Dendritic cell treated with granulocyte-macrophage colony-stimulating factor and Interleukin-4, amounts not matched to agents 40 ng/mL and 50 ng/mL, for 4 days (primary cell): ENCODE measurements at regions of chr6 and their contacts with region 1.

Region 1: DNA sequence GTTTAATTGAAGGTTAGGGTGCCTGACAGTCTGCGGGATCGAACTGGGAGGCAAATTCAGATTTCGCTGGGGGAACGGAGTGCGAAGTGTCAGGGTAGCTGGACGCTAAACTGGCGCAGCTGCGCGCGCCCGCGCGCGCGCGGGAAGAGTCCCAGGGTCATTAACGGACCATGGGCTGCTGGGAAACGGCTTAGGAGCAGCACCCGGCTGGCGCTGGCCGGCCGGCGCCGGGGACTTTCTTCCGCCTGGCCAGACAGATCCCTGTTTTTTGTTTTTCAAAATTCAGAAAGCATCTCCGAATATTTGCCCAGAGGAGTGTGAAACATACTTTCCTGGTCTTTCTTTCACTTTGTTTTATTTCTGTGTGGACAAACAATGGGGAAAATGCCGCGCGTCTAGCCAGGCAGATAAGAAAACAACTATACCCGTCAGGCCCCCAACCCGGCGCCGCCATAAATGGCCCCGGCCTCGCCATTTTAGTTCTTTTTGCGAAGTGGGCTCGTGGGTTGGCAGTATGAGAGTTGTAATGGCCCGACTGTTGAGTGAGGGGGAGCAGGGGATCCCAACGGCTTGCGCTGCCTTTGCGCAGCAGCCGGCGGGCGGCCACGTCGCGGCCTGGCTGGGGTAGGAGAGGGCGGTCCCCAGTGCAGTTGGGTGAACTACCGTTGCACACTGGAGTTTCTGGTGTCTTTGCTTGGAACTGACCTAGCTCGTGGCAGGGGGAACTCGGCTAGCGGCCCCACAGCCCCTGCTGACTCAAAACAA is 7.1 kb downstream of the HSPA1B start:
- H3K4me3 Mint-ChIP-seq: peak overlapping the region; percentile 96
- H3K27ac Mint-ChIP-seq: peak overlapping the region; percentile 97
- H3K4me1 Mint-ChIP-seq: peaks cover 54% of the 10 kb centered on the region
- H3K27me3 Mint-ChIP-seq: no peaks in the 10 kb centered on the region

Region 2: DNA sequence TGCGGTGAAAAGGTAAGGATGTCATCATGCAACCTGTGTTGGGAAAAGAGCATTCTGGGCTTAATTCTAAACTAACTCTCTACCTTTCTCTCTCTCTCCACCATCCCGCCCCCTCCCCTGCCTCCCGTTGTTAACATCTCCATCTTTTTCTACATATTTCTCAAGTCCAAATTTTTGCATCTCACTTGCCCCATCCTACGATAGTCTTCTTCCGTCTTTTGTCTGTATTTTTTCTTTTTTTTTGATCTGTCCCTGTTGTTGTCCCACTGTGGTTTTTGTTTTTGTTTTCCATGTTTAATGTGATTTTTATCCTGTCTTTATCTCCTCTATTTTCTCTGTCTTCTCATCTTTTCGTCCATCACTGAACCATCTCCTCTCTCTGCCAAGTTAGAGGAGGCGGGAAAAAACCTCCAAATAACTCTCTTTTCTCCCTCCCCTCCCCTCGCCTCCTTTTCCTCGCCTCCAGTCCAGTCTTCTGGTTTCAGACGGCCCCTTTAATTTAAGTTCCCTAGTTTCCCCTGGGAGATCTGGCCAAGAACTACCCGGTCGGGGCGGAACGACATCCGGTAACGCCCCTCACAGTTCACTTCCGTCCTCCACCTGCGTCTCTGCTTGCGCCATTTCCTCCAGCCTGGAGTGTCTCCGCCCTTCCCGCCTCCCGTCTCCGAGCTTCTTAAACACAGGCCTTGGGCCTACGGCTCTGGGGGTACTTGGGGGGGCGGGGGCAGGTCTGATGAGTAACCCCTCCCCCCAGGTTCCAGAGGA is 287.5 kb before region 1 on chr6 and contains the start of gene NFKBIL1:
- intact Hi-C with region 1: loop called (anchors 5 kb)
- H3K4me3 Mint-ChIP-seq: peak within 1 kb of the TSS; percentile 77
- H3K27ac Mint-ChIP-seq: peak within 1 kb of the TSS; percentile 80
- H3K4me1 Mint-ChIP-seq: peaks cover 34% of the 10 kb centered on the region
- H3K27me3 Mint-ChIP-seq: no peaks in the 10 kb centered on the region

Region 3: GRCh38 chr6:31680840-31681671 is 153.6 kb before region 1 on chr6 and contains the start of gene LY6G5C:
- intact Hi-C with region 1: loop called (anchors 2 kb)
- H3K4me3 Mint-ChIP-seq: peak within 1 kb of the TSS; percentile 74
- H3K27ac Mint-ChIP-seq: peak within 1 kb of the TSS; percentile 55
- H3K4me1 Mint-ChIP-seq: peaks cover 55% of the 10 kb centered on the region
- H3K27me3 Mint-ChIP-seq: peaks cover 9% of the 10 kb centered on the region

Region 4: GRCh38 chr6:31697555-31697954 is 137.1 kb before region 1 on chr6:
- intact Hi-C with region 1: no loop called
- H3K4me3 Mint-ChIP-seq: no peak overlapping the region
- H3K27ac Mint-ChIP-seq: peak overlapping the region; percentile 45
- H3K4me1 Mint-ChIP-seq: peaks cover 33% of the 10 kb centered on the region
- H3K27me3 Mint-ChIP-seq: no peaks in the 10 kb centered on the region

Region 5: DNA sequence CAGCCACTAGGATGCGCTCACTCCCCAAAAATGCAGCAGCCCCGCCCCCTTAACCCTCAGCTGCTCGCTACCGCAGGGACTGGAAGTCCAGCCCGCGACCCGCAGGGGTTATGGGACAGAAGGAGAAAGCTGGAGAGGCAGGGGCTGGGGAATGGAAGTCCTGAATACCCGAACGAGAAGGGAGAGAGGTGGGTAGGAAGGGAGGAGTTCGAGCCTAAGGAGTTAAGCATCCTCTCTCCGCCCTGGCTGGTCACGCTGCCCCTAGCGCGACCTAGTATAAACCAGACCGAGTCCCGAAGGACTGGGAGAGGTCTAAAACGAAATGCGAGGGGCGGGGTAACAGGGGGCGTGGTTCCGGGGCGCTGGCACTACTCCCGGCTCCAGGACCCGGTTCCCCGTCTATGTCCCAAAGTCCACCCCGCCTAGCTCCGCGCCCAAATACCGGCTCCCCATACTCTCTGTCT is 105.1 kb before region 1 on chr6:
- intact Hi-C with region 1: loop called (anchors 5 kb)
- H3K4me3 Mint-ChIP-seq: peak overlapping the region; percentile 99
- H3K27ac Mint-ChIP-seq: peak overlapping the region; percentile 99
- H3K4me1 Mint-ChIP-seq: peaks cover 91% of the 10 kb centered on the region
- H3K27me3 Mint-ChIP-seq: peaks cover 3% of the 10 kb centered on the region

Region 6: DNA sequence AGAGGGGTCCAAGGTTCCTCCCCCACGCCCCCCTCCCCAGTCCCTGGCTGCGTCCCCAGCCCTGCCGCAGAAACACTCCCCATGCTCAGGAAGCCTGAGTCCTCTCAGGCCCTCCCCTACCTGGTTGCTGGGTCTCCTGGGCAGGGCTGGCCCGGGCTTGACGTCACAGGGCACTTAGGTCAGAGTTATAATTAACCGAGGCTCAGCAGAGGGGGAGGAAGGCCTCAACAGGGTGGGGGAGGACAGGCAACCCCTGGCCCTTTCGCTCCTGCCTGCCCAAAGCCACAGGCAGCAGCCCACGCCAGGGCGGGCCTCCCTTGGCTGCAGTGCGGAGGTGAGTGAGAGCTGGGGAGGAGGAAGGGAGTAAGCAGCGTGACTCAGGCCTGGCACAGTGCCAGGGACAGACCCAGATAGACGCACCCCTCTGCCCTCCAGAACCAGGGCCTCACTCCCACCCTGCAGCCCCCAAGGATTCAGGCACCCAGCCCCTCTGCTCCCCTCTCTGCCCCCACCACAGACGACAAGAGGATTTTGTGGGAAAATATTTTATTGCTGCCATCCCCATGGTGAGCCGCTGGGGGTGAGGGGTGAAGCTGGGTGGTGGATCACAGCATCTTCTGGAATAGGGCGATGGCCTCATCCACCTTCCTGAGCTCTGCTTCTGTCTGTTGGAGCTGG is 57.5 kb before region 1 on chr6 and contains the start of gene VWA7:
- intact Hi-C with region 1: loop called (anchors 1 kb)
- H3K4me3 Mint-ChIP-seq: peak within 1 kb of the TSS; percentile 0
- H3K27ac Mint-ChIP-seq: peak within 1 kb of the TSS; percentile 50
- H3K4me1 Mint-ChIP-seq: peaks cover 45% of the 10 kb centered on the region
- H3K27me3 Mint-ChIP-seq: peaks cover 4% of the 10 kb centered on the region

Region 7: DNA sequence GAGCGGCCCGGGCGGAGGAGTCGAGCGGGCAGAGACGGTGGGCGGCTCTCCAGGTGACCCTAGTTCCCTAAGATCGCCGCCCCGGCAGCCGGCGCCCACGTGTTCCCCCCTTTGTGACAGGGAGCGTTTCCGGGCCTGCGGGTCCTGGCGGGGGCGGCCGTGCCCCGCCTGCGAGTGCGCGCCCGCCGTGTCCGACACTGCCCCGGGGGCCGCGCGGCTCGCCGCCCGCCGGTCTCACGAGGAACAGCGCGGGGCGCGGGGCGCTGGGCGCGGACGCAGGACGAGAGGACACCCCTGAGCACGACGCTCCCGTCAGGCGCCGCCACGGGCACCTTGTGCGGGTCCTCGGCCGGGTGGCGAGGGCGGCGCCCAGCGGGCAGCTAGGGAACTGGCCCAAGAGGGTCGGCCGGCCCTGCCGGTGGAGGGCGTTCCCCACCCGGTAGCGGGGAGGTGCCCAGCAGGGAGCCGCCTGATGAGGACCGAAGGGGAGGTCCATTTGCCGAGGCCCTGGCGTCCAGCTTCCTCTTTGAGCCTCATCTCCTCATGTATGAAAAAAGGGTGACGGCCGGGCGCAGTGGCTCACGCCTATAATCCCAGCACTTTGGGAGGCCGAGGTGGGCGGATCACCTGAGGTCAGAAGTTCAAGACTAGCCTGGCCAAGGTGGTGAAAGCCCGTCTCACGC is 38.9 kb before region 1 on chr6 and contains the start of gene VARS1:
- intact Hi-C with region 1: loop called (anchors 5 kb)
- H3K4me3 Mint-ChIP-seq: peak within 1 kb of the TSS; percentile 95
- H3K27ac Mint-ChIP-seq: peak within 1 kb of the TSS; percentile 96
- H3K4me1 Mint-ChIP-seq: peaks cover 42% of the 10 kb centered on the region
- H3K27me3 Mint-ChIP-seq: no peaks in the 10 kb centered on the region

Region 8: DNA sequence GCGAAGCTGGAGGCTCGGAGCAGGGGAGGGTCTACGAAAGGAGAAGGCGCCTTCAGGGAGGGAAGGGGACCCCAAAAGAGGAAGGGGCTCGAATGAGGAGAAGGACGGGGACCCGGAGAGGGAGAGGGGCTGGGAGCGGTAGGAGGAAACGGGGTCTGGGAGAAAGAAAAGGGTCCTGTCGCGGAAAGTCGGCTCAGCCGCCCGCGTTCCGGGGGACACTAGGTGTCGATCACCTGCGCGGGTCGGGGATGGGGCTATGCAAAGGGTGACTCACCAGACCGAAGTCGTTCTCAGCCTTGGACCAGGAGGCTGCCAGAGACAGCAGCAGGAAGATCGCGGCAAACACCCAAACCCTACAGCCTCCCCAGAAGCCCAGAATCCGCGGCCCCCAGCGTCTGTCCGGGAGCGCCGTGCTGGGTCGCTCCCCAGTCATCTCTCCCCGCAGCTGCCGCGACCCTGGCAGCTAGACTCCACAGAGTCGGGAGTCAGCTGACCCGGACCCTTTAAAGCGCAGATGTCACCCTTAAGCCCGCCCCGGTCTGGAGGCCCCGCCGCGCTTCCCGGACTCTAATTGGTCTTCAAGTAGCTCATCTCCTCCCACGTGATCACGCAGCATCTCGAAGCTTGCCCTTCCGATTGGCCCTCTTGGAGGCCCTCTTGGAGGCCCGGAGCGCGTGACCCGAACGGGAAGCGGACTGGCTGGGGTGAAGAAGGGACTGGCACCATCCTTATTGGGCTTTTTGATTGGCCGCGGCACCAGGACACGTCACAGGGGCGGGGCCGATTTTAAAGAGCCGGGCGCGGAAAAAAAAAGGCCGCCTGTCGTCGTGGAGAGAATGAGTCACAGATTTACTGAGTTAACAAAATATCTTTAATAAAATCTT is 28.0 kb after region 1 on chr6 and contains the start of gene NEU1:
- intact Hi-C with region 1: loop called (anchors 1 kb)
- H3K4me3 Mint-ChIP-seq: peak within 1 kb of the TSS; percentile 96
- H3K27ac Mint-ChIP-seq: peak within 1 kb of the TSS; percentile 87
- H3K4me1 Mint-ChIP-seq: peaks cover 39% of the 10 kb centered on the region
- H3K27me3 Mint-ChIP-seq: no peaks in the 10 kb centered on the region

Region 9: DNA sequence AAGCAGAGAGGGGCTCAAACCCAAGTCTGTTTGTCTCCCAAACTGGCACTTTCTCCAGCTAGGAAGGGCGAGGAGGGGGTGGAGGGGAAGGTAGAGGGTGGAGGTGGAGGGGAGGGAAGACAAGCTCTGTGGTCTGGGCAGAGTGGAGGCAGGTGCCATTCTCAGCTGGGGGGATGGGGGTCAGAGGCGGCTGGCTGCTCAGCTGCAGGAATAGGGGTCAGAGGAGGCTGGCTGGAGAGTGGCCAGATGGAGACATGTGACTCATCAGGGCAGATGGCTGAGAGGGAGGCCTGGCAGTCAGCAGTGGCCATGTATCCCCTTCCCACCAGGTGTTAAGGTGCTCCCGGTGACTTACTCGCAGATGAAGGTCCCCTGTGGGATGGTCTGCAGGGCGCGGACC is 47.7 kb after region 1 on chr6:
- intact Hi-C with region 1: no loop called
- H3K4me3 Mint-ChIP-seq: no peak overlapping the region
- H3K27ac Mint-ChIP-seq: no peak overlapping the region
- H3K4me1 Mint-ChIP-seq: no peaks in the 10 kb centered on the region
- H3K27me3 Mint-ChIP-seq: no peaks in the 10 kb centered on the region